ENCODE measurements at regions of chr20 and their contacts with region 1.

Region 1: GRCh38 chr20:32031007-32031958 is 20.8 kb upstream of the HCK start:
- DNase-seq: peak; percentile 84
- ATAC-seq: peak; percentile 99
- H3K4me3 ChIP-seq: no peak overlapping the region
- H3K27ac ChIP-seq: no peak overlapping the region
- H3K4me1 ChIP-seq: peaks cover 4 to 6% of the 10 kb centered on the region in 2 experiments; a peak in 2 of 4 replicates
- H3K27me3 ChIP-seq: peaks cover 25% of the 10 kb centered on the region
- CTCF ChIP-seq: peak; percentile 92 to 99 (median 95)
- POLR2A ChIP-seq: no peak
- RAD21 ChIP-seq: peak; percentile 89

Region 2: DNA sequence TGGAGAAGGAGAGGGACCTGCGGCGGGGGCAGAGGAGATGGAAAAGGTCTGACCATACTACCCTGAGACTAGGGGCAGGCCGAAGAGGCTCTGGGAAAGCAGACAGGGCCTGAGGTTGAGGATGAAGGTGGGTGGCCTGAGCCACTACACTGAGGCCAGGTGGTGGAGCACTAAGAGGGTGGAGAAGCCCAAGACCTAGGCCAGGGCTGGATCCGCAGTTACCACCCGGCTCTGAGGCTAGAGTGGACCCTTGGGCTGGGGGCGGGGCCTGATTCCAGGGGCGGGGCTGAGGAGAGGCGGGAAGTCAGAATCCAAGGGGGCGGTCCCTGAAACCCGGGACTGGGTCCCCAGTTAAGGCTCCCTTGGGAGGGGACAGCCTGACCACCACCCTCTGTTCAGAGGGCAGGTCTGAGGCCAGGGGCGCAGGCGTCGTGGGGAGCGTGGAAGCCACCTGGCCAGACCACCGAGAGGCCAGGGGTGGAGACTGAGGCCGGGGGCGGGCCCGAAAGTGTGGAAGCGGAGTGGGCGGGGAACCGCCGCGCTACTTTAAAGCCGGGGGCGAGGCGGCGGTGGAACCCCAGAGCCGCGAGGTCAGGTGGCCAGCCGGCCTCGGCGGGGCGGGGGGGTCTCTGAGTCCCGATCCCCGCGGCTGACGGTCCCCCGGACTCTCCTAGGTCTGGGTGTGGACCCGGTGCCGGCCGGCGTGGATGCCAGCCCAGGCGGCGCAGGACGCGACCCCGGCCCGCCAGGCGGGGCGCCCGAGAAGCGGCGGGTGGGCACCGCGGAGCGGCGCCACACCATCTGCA is 12.8 kb before region 1 on chr20:
- CTCF ChIA-PET with region 1: interaction called, 27 read pairs
- POLR2A ChIA-PET with region 1: interaction called, 3 read pairs
- RAD21 ChIA-PET with region 1: no interaction called
- intact Hi-C with region 1: no loop called
- DNase-seq: peak; percentile 81
- ATAC-seq: peak; percentile 85
- H3K4me3 ChIP-seq: peak overlapping the region; percentile 42 to 58
- H3K27ac ChIP-seq: peak overlapping the region; percentile 78
- H3K4me1 ChIP-seq: peaks cover 9 to 24% of the 10 kb centered on the region in 2 experiments
- H3K27me3 ChIP-seq: peaks cover 10% of the 10 kb centered on the region
- CTCF ChIP-seq: no peak
- POLR2A ChIP-seq: peak; percentile 22
- RAD21 ChIP-seq: no peak

Measured in HCT116 (cell line).